Ascending aorta (tissue), 2 donors: ENCODE measurements at regions of chr4 and their contacts with region 1.

Region 1: GRCh38 chr4:140523857-140524742 is at the start of gene ELMOD2:
- DNase-seq: peak; percentile 95 to 99
- H3K4me3 ChIP-seq: peak within 1 kb of the TSS; percentile 87 to 97
- H3K27ac ChIP-seq: peak within 1 kb of the TSS; percentile 66 to 92
- H3K4me1 ChIP-seq: peaks cover 0 to 4% of the 10 kb centered on the region in 2 donors
- H3K27me3 ChIP-seq: no peaks in the 10 kb centered on the region
- CTCF ChIP-seq: peak; percentile 88 to 97 (median 96)
- total RNA-seq, gene ELMOD2: 3.9 TPM

Region 2: DNA sequence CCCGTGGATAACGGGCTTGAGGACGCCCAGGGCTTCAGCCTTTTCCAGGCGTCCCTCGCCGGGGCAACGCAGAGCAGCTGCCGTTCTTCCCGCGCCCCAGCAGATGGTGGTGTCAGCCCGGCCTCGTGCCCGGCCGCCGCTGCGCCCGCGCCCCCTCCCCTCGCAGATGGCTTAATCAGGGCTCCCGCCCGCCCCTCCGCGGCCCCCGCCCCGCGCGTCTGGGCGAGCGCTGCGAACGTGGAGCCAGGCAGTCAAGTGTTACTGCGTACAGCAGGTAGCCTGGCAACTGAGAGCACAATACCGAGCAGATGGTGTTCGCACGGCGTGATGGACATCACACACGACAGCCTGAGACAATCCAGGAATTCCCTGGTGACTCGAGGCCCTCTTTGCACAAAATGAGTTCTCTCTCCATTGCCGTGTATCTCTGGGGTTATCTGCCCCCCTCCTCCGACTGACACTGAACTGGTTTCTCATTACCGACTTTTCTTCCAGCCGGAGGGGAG is 789.2 kb before region 1 on chr4:
- intact Hi-C with region 1: loop called (anchors 10 kb)
- DNase-seq: peak; percentile 51 to 93
- H3K4me3 ChIP-seq: peak overlapping the region; percentile 56 to 66
- H3K27ac ChIP-seq: peak overlapping the region; percentile 69 to 81
- H3K4me1 ChIP-seq: peaks cover 0 to 20% of the 10 kb centered on the region in 2 donors
- H3K27me3 ChIP-seq: no peaks in the 10 kb centered on the region
- CTCF ChIP-seq: peak; percentile 89 to 94 (median 91)

Region 3: GRCh38 chr4:140373328-140374129 is 150.6 kb before region 1 on chr4 and contains the start of gene SCOC:
- intact Hi-C with region 1: loop called (anchors 1 kb)
- DNase-seq: peak; percentile 99 to 100
- H3K4me3 ChIP-seq: peak within 1 kb of the TSS; percentile 93 to 99
- H3K27ac ChIP-seq: peak within 1 kb of the TSS; percentile 92 to 94
- H3K4me1 ChIP-seq: peaks cover 8 to 15% of the 10 kb centered on the region in 2 donors
- H3K27me3 ChIP-seq: no peaks in the 10 kb centered on the region
- CTCF ChIP-seq: no peak
- total RNA-seq, gene SCOC: 7.2 TPM

Region 4: DNA sequence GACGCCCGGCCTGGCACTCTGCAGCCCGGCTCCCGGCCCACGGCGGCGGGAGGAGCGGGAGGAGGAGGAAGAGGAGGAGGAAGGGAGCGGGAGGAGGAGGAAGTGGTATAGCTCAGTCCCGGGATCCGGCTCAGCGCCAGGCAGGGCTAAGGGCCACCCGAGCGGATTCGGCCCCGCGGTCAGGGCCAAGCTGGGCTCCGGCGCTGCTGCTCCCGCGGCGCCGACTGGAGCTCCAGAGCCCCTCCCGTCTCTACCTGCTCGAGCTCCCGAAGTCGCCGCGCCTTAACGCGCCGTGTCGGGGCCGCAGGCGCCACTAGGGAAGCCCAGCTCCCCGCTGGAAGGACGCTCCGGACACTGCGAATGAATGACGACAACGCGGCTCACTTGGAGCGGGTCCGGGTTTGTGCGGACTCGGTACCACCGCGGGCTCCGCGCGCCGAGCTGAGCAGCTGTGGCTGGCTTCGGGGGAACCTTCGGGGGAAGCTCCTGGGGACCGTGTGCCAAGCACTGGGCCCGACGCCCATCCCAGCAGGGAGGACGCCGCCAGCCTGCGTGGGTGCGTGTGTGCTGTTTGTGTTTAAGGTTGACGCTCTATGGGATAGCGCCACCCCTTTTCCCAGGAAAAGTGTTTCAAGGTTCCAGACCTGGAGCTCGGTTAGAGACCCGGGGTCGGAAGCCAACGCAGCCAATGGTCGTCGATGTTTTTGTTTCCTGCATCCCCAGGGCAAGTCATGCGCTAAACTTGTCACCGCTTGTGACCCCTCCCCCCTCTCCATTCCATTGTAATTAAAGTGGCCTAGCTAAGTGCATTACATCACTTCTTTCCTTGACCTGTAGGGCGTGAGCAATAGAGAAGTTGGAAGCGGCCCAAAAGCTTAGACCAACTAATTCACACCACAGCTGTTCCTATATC is 232.5 kb after region 1 on chr4 and contains the start of gene TBC1D9:
- intact Hi-C with region 1: loop called (anchors 2 kb)
- DNase-seq: peak; percentile 64 to 91
- H3K4me3 ChIP-seq: peak within 1 kb of the TSS; percentile 76 to 93
- H3K27ac ChIP-seq: peak within 1 kb of the TSS; percentile 96 to 98
- H3K4me1 ChIP-seq: peaks cover 0 to 8% of the 10 kb centered on the region in 2 donors
- H3K27me3 ChIP-seq: no peaks in the 10 kb centered on the region
- CTCF ChIP-seq: no peak
- total RNA-seq, gene TBC1D9: 25.5 TPM

Region 5: DNA sequence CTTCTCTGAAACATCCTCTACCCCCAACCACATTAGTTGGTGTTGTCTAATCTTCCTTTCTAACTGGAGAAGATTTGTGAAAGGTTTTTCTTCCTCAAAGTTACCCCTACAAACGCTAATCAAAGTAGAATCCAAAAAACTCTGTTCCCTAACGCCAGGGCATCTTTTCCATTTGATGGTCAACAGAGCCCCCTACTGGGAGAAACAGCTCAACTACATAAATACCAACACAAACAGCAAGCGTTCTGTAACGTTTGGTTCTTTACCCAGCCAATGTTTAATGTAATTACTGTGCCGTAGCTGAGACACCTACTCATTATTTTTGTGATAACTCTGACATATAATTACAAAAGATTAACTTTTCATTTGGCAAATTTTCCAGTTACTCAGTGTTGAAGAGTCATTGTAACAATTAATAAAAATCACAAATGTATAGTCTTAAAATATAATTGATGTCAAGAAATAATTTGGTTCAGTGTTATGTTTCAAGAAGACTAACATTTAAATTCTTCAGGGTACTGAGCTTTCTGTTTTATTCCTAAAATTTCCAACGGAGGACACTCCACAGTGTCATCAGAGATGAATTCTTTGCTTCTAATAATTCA is 327.0 kb after region 1 on chr4:
- intact Hi-C with region 1: loop called (anchors 1 kb)
- DNase-seq: peak in 1 of 2 donors; percentile 67
- H3K4me3 ChIP-seq: no peak overlapping the region
- H3K27ac ChIP-seq: no peak overlapping the region
- H3K4me1 ChIP-seq: no peaks in the 10 kb centered on the region
- H3K27me3 ChIP-seq: no peaks in the 10 kb centered on the region
- CTCF ChIP-seq: peak; percentile 71 to 78 (median 76)

Region 6: DNA sequence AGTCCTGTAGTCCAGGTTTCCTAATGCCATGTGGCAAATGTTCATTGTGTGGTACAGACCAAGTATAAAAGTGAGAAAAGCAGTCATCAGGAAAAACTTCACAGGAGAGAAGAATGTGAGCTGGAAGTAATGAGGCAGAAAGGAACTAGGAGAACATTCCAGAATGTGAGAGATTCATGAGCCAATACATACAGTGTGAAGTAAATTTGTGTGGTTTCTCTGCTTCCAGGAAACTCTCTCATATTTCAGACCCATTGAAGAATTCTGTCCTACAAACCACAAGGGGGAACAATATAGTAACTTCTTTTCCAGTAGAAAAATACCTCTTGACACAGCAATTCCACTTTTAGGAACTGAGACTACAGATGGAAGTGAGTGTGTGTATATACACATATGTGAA is 472.7 kb after region 1 on chr4:
- intact Hi-C with region 1: loop called (anchors 10 kb)
- DNase-seq: no peak
- H3K4me3 ChIP-seq: no peak overlapping the region
- H3K27ac ChIP-seq: peak overlapping the region; percentile 9 to 46
- H3K4me1 ChIP-seq: peaks cover 7 to 15% of the 10 kb centered on the region in 2 donors
- H3K27me3 ChIP-seq: no peaks in the 10 kb centered on the region
- CTCF ChIP-seq: no peak

Region 7: GRCh38 chr4:141220655-141221605 is 696.8 kb after region 1 on chr4 and contains the start of gene ZNF330:
- intact Hi-C with region 1: loop called (anchors 5 kb)
- DNase-seq: peak; percentile 36 to 96
- H3K4me3 ChIP-seq: peak within 1 kb of the TSS; percentile 79 to 96
- H3K27ac ChIP-seq: peak within 1 kb of the TSS; percentile 94 to 98
- H3K4me1 ChIP-seq: peaks cover 4 to 5% of the 10 kb centered on the region in 2 donors
- H3K27me3 ChIP-seq: no peaks in the 10 kb centered on the region
- CTCF ChIP-seq: peak in 1 of 3 experiments; percentile 37
- total RNA-seq, gene ZNF330: 7.9 TPM